Panc1 (cell line): ENCODE measurements at regions of chr5 and their contacts with region 1.

Region 1: GRCh38 chr5:43140286-43140685 is 19.6 kb downstream of the ZNF131 start:
- DNase-seq: no peak
- ATAC-seq: no peak
- H3K4me3 ChIP-seq: no peak overlapping the region
- H3K27ac ChIP-seq: no peak overlapping the region
- H3K4me1 ChIP-seq: no peaks in the 10 kb centered on the region
- H3K27me3 ChIP-seq: no peaks in the 10 kb centered on the region
- CTCF ChIP-seq: no peak

Region 2: GRCh38 chr5:42791151-42791550 is 349.1 kb before region 1 on chr5:
- CTCF ChIA-PET with region 1: no interaction called
- POLR2A ChIA-PET with region 1: no interaction called
- in situ Hi-C with region 1: no loop called
- intact Hi-C with region 1: no loop called
- DNase-seq: no peak
- ATAC-seq: no peak
- H3K4me3 ChIP-seq: no peak overlapping the region
- H3K27ac ChIP-seq: no peak overlapping the region
- H3K4me1 ChIP-seq: no peaks in the 10 kb centered on the region
- H3K27me3 ChIP-seq: no peaks in the 10 kb centered on the region
- CTCF ChIP-seq: no peak

Region 3: GRCh38 chr5:43066799-43067741 is 73.2 kb before region 1 on chr5:
- CTCF ChIA-PET with region 1: no interaction called
- POLR2A ChIA-PET with region 1: interaction called, 11 read pairs
- in situ Hi-C with region 1: no loop called
- intact Hi-C with region 1: no loop called
- DNase-seq: peak; percentile 86
- ATAC-seq: peak; percentile 74
- H3K4me3 ChIP-seq: peak overlapping the region; percentile 62 to 94
- H3K27ac ChIP-seq: peak overlapping the region; percentile 100
- H3K4me1 ChIP-seq: peaks cover 13% of the 10 kb centered on the region
- H3K27me3 ChIP-seq: no peaks in the 10 kb centered on the region
- CTCF ChIP-seq: no peak

Region 4: DNA sequence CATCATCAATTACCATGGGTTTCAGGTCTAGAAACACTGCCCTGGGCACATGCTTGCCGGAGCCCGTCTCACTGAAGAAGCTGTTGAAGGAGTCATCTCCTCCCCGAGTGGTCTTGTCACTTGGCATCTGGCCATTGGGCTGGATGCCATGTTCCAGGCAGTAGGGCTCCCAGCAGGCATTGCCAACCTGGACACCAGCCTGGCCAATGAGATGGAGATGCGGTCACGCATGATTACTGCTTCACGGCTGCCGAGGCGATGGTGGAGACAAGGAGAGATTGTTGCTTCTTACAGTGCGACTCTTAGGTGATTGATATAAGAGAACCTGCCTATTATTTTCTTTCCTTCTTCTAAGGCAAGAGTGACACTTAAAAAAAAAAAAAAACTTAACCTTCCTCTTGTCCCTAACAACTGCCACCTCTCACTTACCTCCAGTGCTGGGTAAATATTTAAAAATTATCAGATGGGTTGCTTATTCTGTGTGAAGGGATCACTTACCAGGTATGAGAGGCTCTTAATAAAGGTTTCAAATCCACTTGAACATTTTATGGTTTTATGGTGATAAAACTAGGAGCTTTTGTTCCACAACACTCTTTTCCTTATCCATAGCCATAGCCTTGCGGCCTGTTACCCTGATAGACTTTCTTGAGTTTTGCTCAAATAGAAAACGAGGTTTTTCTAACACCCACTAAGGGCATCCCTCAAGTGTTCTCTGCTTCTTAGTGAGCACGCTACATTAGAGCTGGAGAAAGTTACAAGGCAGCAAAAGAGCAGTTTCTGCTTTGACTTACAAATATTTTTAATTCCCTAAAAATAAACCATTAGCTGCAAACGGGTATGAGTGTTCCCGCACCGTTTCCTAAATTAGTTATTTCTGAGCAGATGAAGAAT is 92.9 kb after region 1 on chr5:
- CTCF ChIA-PET with region 1: no interaction called
- POLR2A ChIA-PET with region 1: interaction called, 13 read pairs
- in situ Hi-C with region 1: no loop called
- intact Hi-C with region 1: no loop called
- DNase-seq: no peak
- ATAC-seq: no peak
- H3K4me3 ChIP-seq: no peak overlapping the region
- H3K27ac ChIP-seq: no peak overlapping the region
- H3K4me1 ChIP-seq: no peaks in the 10 kb centered on the region
- H3K27me3 ChIP-seq: no peaks in the 10 kb centered on the region
- CTCF ChIP-seq: no peak